Activated CD8-positive, alpha-beta T cell treated with anti-CD3 and anti-CD28 coated beads for 36 hours (primary cell): ENCODE measurements at regions of chr1 and their contacts with region 1.

Region 1: DNA sequence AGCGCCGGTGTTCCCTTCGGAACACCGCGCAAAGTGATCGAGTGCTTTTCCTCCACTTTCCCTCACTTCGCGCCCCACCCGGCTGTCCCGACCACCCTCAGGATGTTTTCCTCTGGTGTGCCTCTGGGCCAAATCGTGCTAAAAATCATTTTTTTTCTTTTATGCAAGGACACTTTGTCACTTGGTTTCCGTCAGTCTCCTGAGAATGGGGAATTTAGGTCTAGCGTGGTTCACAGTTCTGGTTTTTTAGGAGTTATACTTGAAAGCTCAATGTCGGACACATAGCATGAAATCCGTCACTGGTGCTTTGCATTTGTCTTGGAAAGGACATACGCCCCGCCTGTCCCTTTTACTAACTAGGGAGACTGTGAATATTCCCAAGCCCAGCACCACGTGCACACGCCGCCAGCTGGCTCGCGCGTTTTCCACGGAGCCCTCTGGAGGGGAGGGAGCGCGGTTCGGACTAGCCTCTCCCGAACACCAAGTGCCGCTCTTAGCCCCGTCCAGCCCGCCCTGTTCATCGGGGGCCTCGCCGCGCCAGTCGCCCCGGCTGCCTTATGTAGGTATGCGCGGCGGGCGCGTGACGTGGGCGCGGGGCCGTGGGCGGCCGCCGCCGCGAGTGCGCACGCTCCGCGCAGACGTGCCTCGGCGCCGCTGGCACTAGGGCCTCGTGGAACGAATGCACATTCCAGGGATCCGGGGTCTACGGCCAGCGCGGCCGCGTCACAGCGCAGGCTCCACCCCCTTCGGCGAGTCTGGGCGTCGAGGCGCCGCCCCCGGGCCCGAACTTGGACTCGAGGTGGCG is 572 bp upstream of the IRF2BP2 start:
- DNase-seq: peak; percentile 94
- ATAC-seq: peak; percentile 63
- H3K4me3 Mint-ChIP-seq: peak overlapping the region; percentile 92
- H3K27ac Mint-ChIP-seq: peak overlapping the region; percentile 99
- H3K4me1 Mint-ChIP-seq: peaks cover 31% of the 10 kb centered on the region
- H3K27me3 Mint-ChIP-seq: no peaks in the 10 kb centered on the region
- CTCF ChIP-seq: no peak

Region 2: DNA sequence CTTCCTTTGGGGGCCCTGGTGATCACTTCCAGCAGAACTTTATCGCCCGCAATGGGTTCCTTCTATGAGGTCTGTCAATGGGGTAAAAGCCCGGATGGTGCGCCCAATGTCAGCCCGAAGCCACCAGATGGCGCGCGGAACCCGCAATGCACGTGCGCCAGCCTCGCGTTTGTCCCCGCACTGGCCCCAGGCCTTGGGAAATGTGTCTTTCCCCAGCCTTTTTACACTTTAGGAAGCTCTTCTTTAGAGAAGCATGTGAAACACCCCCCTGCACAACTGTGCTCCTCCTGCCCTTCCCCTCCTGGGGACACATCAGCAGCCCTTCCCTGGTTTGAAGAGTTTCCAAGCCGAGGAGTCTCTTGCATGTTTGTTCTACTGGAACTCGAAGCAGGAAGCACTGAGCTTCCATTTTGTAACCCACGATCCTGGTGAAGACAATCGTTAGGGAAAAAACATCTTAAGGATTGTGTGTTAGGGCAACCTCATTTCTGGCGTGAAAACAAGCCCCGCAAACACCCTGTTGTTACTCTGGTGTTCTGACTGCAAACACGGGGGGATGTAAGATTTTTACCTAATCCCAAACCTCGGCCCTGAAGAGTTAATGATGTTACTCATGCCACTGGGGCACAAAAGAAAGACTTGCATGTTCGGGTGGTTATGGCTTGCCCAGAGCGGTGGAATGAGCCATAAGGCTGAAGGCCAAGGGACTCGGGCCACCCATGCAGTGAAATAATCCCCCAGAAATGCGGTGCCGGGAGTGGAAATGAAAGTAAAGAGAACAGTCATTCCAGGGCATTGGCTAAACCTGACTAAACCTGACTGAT is 111.2 kb before region 1 on chr1:
- CTCF ChIA-PET with region 1: interaction called, 10 read pairs
- POLR2A ChIA-PET with region 1: interaction called, 27 read pairs
- intact Hi-C with region 1: no loop called
- DNase-seq: peak; percentile 91
- ATAC-seq: peak; percentile 63
- H3K4me3 Mint-ChIP-seq: no peak overlapping the region
- H3K27ac Mint-ChIP-seq: peak overlapping the region; percentile 82
- H3K4me1 Mint-ChIP-seq: peaks cover 64% of the 10 kb centered on the region
- H3K27me3 Mint-ChIP-seq: peaks cover 6% of the 10 kb centered on the region
- CTCF ChIP-seq: peak; percentile 98

Region 3: DNA sequence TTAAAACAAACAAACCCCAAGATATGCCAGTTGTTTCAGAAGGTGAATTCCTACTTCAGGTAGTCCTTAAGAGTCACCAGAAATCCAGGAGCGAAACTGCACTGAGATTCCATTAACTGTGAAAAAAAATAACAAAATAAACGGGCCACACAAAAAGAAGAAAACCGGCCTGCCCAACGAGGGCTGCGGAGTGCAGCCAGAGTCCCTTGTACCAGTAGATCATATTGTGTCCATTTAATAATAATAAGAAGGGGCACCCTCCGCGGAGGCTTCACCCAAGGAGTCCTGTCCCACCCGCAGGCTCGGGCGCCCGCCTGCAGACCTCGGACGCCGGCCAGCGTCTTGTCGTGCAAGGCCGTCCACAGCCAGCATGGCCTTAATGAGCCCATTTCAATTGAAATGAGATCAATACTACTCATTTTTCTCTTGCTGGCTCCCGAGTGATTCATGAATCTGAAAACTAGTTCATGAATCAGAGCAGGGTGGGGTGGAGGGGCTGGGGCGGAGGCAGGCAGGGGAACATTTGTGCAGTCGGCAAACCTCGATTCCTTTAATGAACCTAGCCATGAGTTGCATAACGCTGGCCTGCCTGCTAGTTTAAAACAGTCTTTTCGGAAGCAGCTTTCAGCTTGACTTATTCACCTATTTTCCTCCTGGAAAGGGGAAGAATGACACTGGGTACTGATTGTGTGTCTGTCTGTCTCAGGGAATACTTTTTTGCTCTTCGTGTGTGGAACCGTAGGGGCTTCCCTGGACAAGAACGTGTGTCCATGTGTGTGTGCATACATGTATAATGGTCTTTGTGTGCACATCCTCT is 112.6 kb after region 1 on chr1:
- CTCF ChIA-PET with region 1: interaction called, 13 read pairs
- POLR2A ChIA-PET with region 1: interaction called, 132 read pairs
- intact Hi-C with region 1: loop called (anchors 2 kb)
- DNase-seq: peak; percentile 89
- ATAC-seq: peak; percentile 63
- H3K4me3 Mint-ChIP-seq: peak overlapping the region; percentile 74
- H3K27ac Mint-ChIP-seq: peak overlapping the region; percentile 99
- H3K4me1 Mint-ChIP-seq: peaks cover 70% of the 10 kb centered on the region
- H3K27me3 Mint-ChIP-seq: no peaks in the 10 kb centered on the region
- CTCF ChIP-seq: no peak

Region 4: GRCh38 chr1:234772345-234773147 is 162.0 kb after region 1 on chr1:
- CTCF ChIA-PET with region 1: interaction called, 8 read pairs
- POLR2A ChIA-PET with region 1: interaction called, 9 read pairs
- intact Hi-C with region 1: loop called (anchors 2 kb)
- DNase-seq: peak; percentile 98
- ATAC-seq: peak; percentile 72
- H3K4me3 Mint-ChIP-seq: peak overlapping the region; percentile 57
- H3K27ac Mint-ChIP-seq: peak overlapping the region; percentile 93
- H3K4me1 Mint-ChIP-seq: peaks cover 60% of the 10 kb centered on the region
- H3K27me3 Mint-ChIP-seq: no peaks in the 10 kb centered on the region
- CTCF ChIP-seq: no peak

Region 5: GRCh38 chr1:234963180-234963903 is 352.8 kb after region 1 on chr1:
- CTCF ChIA-PET with region 1: no interaction called
- POLR2A ChIA-PET with region 1: interaction called, 26 read pairs
- intact Hi-C with region 1: loop called (anchors 5 kb)
- DNase-seq: peak; percentile 98
- ATAC-seq: peak; percentile 79
- H3K4me3 Mint-ChIP-seq: peak overlapping the region; percentile 56
- H3K27ac Mint-ChIP-seq: peak overlapping the region; percentile 93
- H3K4me1 Mint-ChIP-seq: peaks cover 70% of the 10 kb centered on the region
- H3K27me3 Mint-ChIP-seq: no peaks in the 10 kb centered on the region
- CTCF ChIP-seq: no peak

Region 6: GRCh38 chr1:235075188-235075926 is 464.8 kb after region 1 on chr1:
- CTCF ChIA-PET with region 1: no interaction called
- POLR2A ChIA-PET with region 1: interaction called, 4 read pairs
- intact Hi-C with region 1: loop called (anchors 5 kb)
- DNase-seq: peak; percentile 86
- ATAC-seq: peak; percentile 56
- H3K4me3 Mint-ChIP-seq: peak overlapping the region; percentile 51
- H3K27ac Mint-ChIP-seq: peak overlapping the region; percentile 96
- H3K4me1 Mint-ChIP-seq: peaks cover 31% of the 10 kb centered on the region
- H3K27me3 Mint-ChIP-seq: no peaks in the 10 kb centered on the region
- CTCF ChIP-seq: no peak